Esophagus muscularis mucosa (tissue), 4 donors: ENCODE measurements at regions of chr7 and their contacts with region 1.

Region 1: GRCh38 chr7:17530741-17531417 is 232.4 kb downstream of the AHR start:
- DNase-seq: no peak
- H3K4me3 ChIP-seq: no peak overlapping the region
- H3K27ac ChIP-seq: no peak overlapping the region
- H3K4me1 ChIP-seq: peaks cover 0 to 4% (median 2%) of the 10 kb centered on the region in 4 donors
- H3K27me3 ChIP-seq: no peaks in the 10 kb centered on the region
- CTCF ChIP-seq: peak; percentile 14 to 40 (median 21)
- EP300 ChIP-seq: no peak
- POLR2A ChIP-seq: no peak

Region 2: DNA sequence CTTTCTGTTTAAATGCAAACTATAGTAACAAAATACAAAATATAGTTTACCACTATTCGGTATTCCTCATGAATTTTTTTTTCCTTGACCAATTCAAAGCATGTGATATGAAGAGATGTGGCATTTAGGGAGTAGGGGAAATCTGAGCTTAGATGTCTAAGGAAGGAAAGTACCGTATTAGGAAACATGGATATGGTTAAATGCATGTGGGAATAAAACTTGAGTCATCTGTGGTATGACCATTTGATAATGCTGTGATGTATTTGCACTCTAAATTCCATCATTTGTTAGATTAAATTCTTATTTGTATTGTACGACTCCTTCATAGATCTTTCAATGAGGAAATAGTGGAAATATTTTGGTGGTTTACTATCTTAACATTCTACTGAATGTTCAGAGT is 212.7 kb before region 1 on chr7:
- intact Hi-C with region 1: loop called (anchors 10 kb)
- DNase-seq: no peak
- H3K4me3 ChIP-seq: no peak overlapping the region
- H3K27ac ChIP-seq: peak overlapping the region in 1 of 4 donors; percentile 21
- H3K4me1 ChIP-seq: peaks cover 39 to 64% (median 52%) of the 10 kb centered on the region in 4 donors
- H3K27me3 ChIP-seq: no peaks in the 10 kb centered on the region
- CTCF ChIP-seq: no peak
- EP300 ChIP-seq: no peak
- POLR2A ChIP-seq: no peak

Region 3: DNA sequence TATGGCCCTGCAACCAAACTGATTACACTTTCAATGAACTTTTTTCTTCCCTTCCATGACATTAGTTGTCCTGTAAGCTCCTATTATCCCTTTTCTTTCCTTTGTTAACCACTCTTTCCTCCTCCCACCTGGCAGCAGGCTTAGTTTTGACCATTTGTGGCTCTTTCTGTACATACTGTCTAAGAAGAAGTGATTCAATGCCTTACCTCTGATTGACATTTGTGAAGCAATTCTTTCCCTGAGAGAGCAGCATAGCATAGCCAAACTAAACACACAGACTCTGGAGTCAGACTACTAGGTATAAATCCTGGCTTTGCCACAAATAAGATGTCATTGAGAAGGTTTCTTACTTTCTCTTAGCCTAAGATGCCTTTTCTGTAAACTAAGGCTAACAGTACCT is 183.5 kb before region 1 on chr7:
- intact Hi-C with region 1: no loop called
- DNase-seq: no peak
- H3K4me3 ChIP-seq: no peak overlapping the region
- H3K27ac ChIP-seq: no peak overlapping the region
- H3K4me1 ChIP-seq: peaks cover 0 to 26% (median 16%) of the 10 kb centered on the region in 4 donors
- H3K27me3 ChIP-seq: no peaks in the 10 kb centered on the region
- CTCF ChIP-seq: no peak
- EP300 ChIP-seq: no peak
- POLR2A ChIP-seq: no peak